Body of pancreas (tissue), 4 donors: ENCODE measurements at regions of chr4 and their contacts with region 1.

Region 1: GRCh38 chr4:107689912-107690565 is 30.0 kb downstream of the PAPSS1 start:
- DNase-seq: no peak
- ATAC-seq: no peak
- H3K4me3 ChIP-seq: no peak overlapping the region
- H3K27ac ChIP-seq: no peak overlapping the region
- H3K4me1 ChIP-seq: peaks cover 56% of the 10 kb centered on the region
- H3K27me3 ChIP-seq: no peaks in the 10 kb centered on the region
- CTCF ChIP-seq: no peak
- POLR2A ChIP-seq: no peak

Region 2: DNA sequence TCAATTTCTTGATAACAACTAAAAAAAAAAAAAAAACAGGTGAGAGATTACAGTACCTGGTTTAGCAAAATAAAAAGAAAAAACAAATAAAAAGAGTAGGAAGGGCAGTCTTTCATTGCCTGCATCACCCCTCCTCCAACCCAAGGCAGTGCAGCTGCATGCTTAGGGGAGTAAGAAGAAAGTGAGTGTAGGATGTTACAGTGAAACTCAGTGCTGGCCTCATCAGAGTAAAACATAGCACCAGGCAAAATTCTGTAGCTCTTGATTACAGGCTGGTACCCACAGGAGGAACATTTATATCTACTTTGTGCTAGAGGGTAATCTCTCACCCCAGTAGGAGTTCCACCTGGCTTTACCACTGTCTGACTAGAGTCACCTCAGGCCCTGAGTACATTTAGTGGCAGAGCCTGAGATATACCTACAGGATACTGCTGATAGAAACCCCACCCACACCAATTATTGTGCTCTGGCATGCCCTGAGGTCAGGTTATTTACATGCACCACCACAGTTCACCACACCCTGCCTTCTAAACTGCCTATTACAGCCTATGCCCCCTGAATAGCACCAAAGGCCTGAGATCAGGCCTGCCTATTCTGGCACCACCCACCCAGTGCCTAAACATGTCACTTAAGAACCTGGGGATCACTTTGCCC is 211.6 kb before region 1 on chr4:
- intact Hi-C with region 1: no loop called
- DNase-seq: no peak
- ATAC-seq: no peak
- H3K4me3 ChIP-seq: no peak overlapping the region
- H3K27ac ChIP-seq: no peak overlapping the region
- H3K4me1 ChIP-seq: no peaks in the 10 kb centered on the region
- H3K27me3 ChIP-seq: no peaks in the 10 kb centered on the region
- CTCF ChIP-seq: no peak
- POLR2A ChIP-seq: no peak

Region 3: DNA sequence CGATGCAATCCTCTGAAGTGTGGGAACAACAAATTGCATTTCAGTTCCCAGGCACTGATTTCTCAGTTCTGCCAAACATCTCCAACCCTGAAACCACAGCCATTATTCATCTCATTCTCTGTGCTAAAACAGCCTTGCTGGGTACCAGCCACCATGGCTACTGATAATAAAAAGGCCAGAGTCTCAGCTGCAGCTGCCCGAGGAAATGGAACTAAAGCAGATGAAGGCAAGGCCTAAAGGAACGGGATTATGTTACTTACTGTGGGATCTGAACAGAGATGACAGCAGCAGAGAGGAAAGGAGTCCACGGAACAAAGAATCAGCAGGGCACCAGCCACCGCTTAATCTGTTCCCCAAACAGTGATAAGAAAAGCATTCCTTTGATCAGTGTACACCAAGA is 125.7 kb before region 1 on chr4:
- intact Hi-C with region 1: no loop called
- DNase-seq: no peak
- ATAC-seq: no peak
- H3K4me3 ChIP-seq: no peak overlapping the region
- H3K27ac ChIP-seq: no peak overlapping the region
- H3K4me1 ChIP-seq: no peaks in the 10 kb centered on the region
- H3K27me3 ChIP-seq: no peaks in the 10 kb centered on the region
- CTCF ChIP-seq: no peak
- POLR2A ChIP-seq: no peak

Region 4: GRCh38 chr4:107631560-107631959 is 58.5 kb before region 1 on chr4:
- intact Hi-C with region 1: loop called (anchors 10 kb)
- DNase-seq: peak; percentile 57 to 71 (median 64)
- ATAC-seq: peak; percentile 65
- H3K4me3 ChIP-seq: no peak overlapping the region
- H3K27ac ChIP-seq: peak overlapping the region in 2 of 4 donors; percentile 7 to 31
- H3K4me1 ChIP-seq: peaks cover 38% of the 10 kb centered on the region
- H3K27me3 ChIP-seq: no peaks in the 10 kb centered on the region
- CTCF ChIP-seq: no peak
- POLR2A ChIP-seq: no peak

Region 5: DNA sequence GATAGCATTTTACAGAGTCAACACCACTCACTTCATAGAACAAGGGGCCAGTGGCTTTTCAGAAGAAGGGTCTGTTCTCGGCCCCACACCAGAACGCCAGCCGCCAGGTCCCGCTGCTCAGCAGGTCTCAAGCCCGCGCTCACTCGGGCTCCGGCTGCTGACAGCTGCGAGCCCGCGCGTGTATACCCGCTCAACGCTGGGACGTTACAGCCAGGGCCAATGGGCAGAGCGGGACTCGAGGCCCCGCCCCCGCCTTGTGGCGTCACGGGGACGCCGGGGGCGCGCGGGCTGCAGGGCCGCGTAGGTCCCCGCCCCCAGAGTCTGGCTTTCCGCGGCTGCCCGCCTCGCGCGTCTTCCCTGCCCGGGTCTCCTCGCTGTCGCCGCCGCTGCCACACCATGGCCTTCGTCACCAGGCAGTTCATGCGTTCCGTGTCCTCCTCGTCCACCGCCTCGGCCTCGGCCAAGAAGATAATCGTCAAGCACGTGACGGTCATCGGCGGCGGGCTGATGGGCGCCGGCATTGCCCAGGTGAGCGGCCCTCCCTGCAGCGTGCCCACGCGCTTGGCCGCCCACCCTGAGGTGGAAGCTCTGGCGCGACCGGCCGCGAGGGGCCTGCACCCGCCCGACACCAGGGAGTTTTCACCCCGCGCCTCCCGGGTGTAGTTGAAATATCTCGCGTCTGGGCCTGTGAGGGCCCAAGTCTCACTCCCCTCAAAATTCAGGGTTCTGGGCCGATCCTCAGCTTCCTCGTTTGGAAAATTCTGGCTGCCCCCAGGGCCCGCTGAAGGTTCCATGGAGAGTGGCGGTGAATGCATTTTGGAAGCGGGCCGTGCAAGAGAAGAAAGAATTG is 299.7 kb after region 1 on chr4 and contains the start of gene HADH:
- intact Hi-C with region 1: no loop called
- DNase-seq: peak; percentile 95 to 97 (median 96)
- ATAC-seq: peak; percentile 99
- H3K4me3 ChIP-seq: peak within 1 kb of the TSS; percentile 68
- H3K27ac ChIP-seq: peak within 1 kb of the TSS; percentile 75 to 93 (median 88)
- H3K4me1 ChIP-seq: peaks cover 52% of the 10 kb centered on the region
- H3K27me3 ChIP-seq: no peaks in the 10 kb centered on the region
- CTCF ChIP-seq: peak in 1 of 7 experiments; percentile 3
- POLR2A ChIP-seq: peak; percentile 88 to 94 (median 94)
- total RNA-seq, gene HADH: 23.9 to 34.6 TPM